AG04450 (cell line): ENCODE measurements at regions of chr17 and their contacts with region 1.

Region 1: DNA sequence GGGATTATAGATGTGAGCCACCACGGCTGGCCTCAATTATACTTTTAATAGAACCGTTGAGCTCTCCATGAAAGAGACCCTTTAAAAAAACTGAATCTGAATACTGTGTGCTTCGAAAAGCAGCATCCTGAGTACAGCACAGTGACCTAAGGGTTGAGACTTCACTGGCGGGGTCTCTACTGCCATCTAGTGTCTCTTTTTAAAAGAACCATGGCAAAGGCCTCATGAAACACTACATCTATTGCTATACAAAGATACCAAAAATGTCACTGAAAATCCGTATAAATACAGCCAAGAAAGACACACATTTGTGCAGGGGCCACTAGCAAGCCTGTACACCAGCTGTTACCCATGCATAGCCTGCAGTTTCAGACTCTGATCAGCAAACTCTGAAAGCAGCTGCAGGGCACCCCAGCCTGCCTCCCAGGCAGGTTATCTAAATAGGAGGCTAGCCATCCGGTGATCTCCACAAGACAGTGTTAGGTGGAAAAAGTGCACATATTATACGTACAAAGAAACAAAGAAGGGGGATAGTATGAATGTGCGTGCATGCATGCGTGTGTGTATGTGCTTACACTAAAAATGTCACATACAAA is 35.3 kb downstream of the NPLOC4 start:
- DNase-seq: peak; percentile 38
- H3K4me3 ChIP-seq: no peak overlapping the region
- H3K27ac ChIP-seq: no peak overlapping the region
- H3K27me3 ChIP-seq: no peaks in the 10 kb centered on the region
- CTCF ChIP-seq: peak; percentile 91

Region 2: GRCh38 chr17:81512560-81513371 is 88.9 kb before region 1 on chr17 and contains the start of gene ACTG1:
- CTCF ChIA-PET with region 1: interaction called, 19 read pairs
- POLR2A ChIA-PET with region 1: interaction called, 12 read pairs
- DNase-seq: peak; percentile 72
- H3K4me3 ChIP-seq: peak within 1 kb of the TSS; percentile 96
- H3K27ac ChIP-seq: peak within 1 kb of the TSS; percentile 98
- H3K27me3 ChIP-seq: no peaks in the 10 kb centered on the region
- CTCF ChIP-seq: no peak
- polyA plus RNA-seq, gene ACTG1: 2,721 and 3,607 TPM in 2 replicates

Region 3: DNA sequence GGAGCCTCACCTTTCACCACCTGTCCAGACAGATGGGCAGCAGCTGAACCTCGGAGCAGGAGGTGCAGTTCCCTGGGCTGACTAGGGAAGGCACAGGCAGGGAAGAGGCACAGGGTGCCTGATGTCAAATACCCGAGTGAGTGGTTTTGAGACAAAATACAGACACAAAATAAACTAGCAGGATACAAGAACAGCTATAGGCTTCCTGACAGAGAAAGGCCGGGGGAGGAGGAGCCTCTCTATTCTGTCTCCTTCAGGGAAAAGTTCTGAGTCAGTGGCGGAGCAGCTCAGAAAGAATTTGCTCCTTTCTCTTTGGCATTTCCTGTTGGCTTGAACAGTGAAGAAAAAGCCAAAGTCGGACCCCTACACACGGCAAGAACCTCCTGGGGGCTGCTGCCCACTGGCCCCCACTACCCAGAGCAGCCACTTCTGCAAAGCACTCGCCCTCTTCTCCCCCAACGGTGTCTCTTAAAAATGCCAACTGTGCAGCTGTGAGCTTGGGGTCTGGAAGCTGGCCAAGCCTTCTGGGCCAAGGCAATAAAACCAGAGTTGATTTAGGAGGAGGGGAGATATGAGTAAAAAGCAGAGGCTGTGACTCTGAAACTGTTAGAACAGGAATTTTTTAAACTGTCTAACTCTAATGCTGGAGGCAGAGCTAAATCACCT is 35.0 kb before region 1 on chr17:
- CTCF ChIA-PET with region 1: interaction called, 28 read pairs
- POLR2A ChIA-PET with region 1: interaction called, 7 read pairs
- DNase-seq: peak; percentile 79
- H3K4me3 ChIP-seq: peak overlapping the region; percentile 44
- H3K27ac ChIP-seq: peak overlapping the region; percentile 89
- H3K27me3 ChIP-seq: no peaks in the 10 kb centered on the region
- CTCF ChIP-seq: no peak

Region 4: DNA sequence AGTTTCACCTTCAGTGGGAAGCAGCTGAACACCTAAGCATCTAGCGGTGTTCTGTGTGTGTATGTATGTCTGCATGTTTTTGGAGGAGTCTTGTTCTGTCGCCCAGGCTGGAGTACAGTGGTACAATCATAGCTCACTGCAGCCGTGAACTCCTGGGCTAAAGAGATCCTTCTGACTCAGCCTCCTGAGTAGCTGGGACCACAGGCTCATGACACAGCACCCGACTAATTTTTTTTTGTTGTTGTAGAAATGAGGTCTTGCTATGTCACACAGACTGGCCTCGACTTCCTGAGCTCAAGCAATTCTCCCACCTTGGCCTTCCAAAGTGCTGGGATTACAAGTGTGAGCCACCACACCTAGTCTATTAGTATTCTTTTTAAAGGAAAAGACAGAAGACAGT is 19.3 kb before region 1 on chr17:
- CTCF ChIA-PET with region 1: interaction called, 17 read pairs
- POLR2A ChIA-PET with region 1: interaction called, 8 read pairs
- DNase-seq: no peak
- H3K4me3 ChIP-seq: no peak overlapping the region
- H3K27ac ChIP-seq: peak overlapping the region; percentile 39
- H3K27me3 ChIP-seq: no peaks in the 10 kb centered on the region
- CTCF ChIP-seq: no peak

Region 5: DNA sequence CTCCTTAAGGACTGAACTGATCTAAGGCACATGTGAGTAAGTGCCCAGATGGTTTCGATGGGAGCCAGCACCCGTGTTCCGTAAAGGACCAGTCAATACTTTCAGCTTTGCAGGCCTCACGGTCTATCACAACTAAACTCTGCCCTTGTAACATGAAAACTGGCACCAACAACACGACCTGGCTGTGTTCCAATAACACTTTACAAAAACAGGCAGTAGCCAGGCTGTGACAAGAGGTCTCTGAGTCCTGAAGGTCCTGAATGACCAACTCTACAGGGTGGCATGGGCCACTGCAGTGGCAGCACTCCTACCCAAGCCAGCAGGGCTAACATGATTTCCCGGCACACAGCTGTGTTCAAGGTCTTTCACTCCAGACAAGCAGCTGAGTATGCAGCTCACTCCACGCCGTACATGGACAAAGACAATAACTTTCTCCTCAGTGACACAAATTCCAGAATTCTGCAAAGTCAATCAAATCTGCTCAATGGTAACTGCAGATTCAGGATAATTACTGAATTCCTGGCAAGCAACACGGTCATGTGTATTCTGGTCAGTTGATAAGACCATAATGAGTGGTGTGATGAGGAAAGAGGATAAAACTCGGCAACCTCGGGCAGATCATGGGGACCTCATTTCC is 20.0 kb after region 1 on chr17:
- CTCF ChIA-PET with region 1: interaction called, 12 read pairs
- POLR2A ChIA-PET with region 1: no interaction called
- DNase-seq: no peak
- H3K4me3 ChIP-seq: no peak overlapping the region
- H3K27ac ChIP-seq: no peak overlapping the region
- H3K27me3 ChIP-seq: no peaks in the 10 kb centered on the region
- CTCF ChIP-seq: no peak